ENCODE measurements at regions of chr7 and their contacts with region 1.

Region 1: DNA sequence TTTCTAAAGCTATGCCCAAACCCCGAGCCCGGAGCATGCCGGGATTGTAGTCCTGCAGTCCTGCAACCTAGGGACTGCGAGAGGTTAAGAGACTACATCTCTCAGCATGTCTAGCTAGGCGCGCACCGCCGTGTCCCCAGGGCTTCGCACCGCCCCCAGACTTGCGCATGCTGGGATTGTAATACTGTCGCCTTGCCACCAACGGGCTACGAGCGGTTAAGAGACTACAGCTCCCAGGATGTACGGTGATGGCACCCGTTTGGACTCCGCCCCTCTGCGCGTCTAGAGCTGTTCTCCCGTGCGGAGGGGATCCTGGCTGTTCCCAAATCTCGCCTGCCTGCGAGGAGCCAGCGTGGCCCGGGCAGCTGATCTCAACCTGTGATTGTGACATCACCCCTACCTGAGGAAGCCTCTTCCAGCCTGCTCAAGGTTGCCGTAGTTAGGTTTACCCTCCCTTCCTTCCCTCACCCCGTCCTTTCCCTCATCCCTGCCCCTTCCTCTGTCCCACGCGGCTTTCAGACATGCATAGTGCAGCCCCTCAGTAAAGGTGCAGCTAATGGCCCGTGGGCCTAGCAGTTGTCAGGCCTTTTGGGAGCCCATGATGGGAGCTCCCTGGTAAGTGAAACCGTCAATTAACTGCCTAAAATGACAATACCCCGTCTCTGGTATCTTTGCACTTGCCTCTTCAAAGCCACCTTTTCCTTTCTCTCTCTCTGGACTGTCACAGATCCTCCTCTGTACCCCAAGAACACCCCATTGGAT is 6.3 kb upstream of the ZNF736 start:
- DNase-seq: peak; percentile 93 to 99 (median 98)
- H3K4me3 ChIP-seq: peak overlapping the region; percentile 40 to 82 (median 72)
- H3K27ac ChIP-seq: peak overlapping the region; percentile 37 to 96 (median 90)
- H3K27me3 ChIP-seq: no peaks in the 10 kb centered on the region
- CTCF ChIP-seq: peak in 26 of 56 donors; percentile 4 to 45 (median 25)

Region 2: DNA sequence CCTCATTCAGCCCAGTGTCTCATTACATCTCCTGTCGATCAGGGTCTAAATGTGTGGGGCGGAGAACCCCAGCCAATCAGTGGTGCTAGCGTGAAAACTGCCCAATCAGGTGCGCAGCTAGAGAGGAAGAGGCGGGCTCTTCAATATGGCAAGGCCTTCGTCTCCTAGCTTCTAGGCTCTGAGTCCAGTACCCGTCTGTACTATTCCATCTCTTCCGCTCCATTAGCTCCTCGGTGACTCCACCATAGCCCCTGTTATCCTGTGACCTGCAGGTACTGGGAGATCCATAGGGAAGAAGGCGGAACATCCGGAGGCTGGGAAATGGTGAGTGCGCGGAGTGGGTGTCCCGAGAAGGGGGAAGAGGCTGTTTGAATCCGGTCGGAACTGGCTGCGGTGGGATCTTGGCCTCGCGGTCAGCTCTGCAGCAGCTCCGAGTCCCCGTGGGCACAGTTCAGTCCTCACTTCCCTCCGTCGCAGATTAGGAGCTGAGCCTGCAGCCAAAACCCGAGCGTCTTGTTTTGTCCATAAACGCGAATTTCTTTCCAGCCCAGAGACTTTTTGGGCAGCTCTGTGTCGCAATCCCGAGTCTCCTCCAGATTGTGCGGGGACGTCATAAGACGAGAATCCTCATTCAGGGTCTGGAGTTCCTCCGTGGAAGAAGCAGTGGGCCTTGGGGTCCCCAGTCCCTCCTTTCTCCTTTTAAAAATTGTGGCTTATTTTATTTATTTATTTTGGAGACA is 262.0 kb before region 1 on chr7 and contains the start of gene ZNF727:
- intact Hi-C with region 1: loop called in 1 of 2 experiments (anchors 10 kb)
- DNase-seq: peak; percentile 52 to 88 (median 84)
- H3K4me3 ChIP-seq: peak within 1 kb of the TSS; percentile 28 to 86 (median 68)
- H3K27ac ChIP-seq: peak within 1 kb of the TSS in 58 of 59 donors; percentile 7 to 91 (median 77)
- H3K27me3 ChIP-seq: peaks cover 0 to 7% (median 0%) of the 10 kb centered on the region in 45 donors
- CTCF ChIP-seq: peak in 2 of 56 donors; percentile 12 to 17
- total RNA-seq, gene ZNF727: 1.0 to 20.9 (median 11.1) TPM

Region 3: GRCh38 chr7:64183126-64183742 is 124.2 kb before region 1 on chr7:
- intact Hi-C with region 1: loop called in 1 of 2 experiments (anchors 10 kb)
- DNase-seq: peak in 2 of 10 donors; percentile 38 to 41
- H3K4me3 ChIP-seq: peak overlapping the region in 1 of 59 donors; percentile 23
- H3K27ac ChIP-seq: no peak overlapping the region
- H3K27me3 ChIP-seq: peaks cover 0 to 45% (median 16%) of the 10 kb centered on the region in 45 donors
- CTCF ChIP-seq: peak; percentile 43 to 88 (median 77)

Region 4: GRCh38 chr7:64618785-64619456 is 311.5 kb after region 1 on chr7:
- intact Hi-C with region 1: loop called in 1 of 2 experiments (anchors 10 kb)
- DNase-seq: no peak
- H3K4me3 ChIP-seq: peak overlapping the region in 2 of 59 donors; percentile 17 to 27
- H3K27ac ChIP-seq: no peak overlapping the region
- H3K27me3 ChIP-seq: no peaks in the 10 kb centered on the region
- CTCF ChIP-seq: peak; percentile 49 to 90 (median 69)

Measured in dorsolateral prefrontal cortex (tissue), 120 donors.